ENCODE measurements at regions of chr6 and their contacts with region 1.

Region 1: DNA sequence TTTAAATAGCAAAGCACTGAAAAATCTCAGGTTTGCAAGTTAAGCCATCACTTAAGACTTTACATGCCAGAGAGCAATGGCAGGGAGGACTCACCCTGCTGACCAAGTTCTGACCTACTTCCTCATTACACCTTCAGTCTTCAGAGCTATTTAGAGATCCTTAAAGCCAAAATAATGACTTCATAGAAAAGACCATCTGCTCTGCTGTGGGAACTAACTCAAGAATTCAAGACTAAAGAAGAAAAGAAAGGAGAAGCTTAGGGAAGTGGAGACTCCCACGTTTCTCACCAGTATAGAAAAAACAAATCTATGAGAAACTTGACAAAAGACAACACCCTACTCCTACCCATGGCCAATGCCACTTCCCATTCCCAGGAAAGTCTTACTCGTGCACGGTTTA is 28.6 kb downstream of the XPO5 start:
- DNase-seq: no peak
- ATAC-seq: no peak
- H3K4me3 Mint-ChIP-seq: no peak overlapping the region
- H3K27ac Mint-ChIP-seq: no peak overlapping the region
- H3K4me1 Mint-ChIP-seq: no peaks in the 10 kb centered on the region
- H3K27me3 Mint-ChIP-seq: no peaks in the 10 kb centered on the region

Region 2: GRCh38 chr6:43559328-43559727 is 12.1 kb after region 1 on chr6:
- CTCF ChIA-PET with region 1: interaction called, 5 read pairs
- POLR2A ChIA-PET with region 1: no interaction called
- intact Hi-C with region 1: loop called in 1 of 2 experiments (anchors 2 kb)
- DNase-seq: no peak
- ATAC-seq: no peak
- H3K4me3 Mint-ChIP-seq: no peak overlapping the region
- H3K27ac Mint-ChIP-seq: no peak overlapping the region
- H3K4me1 Mint-ChIP-seq: no peaks in the 10 kb centered on the region
- H3K27me3 Mint-ChIP-seq: no peaks in the 10 kb centered on the region

Region 3: GRCh38 chr6:43817192-43817591 is 270.0 kb after region 1 on chr6:
- CTCF ChIA-PET with region 1: no interaction called
- POLR2A ChIA-PET with region 1: no interaction called
- intact Hi-C with region 1: no loop called
- DNase-seq: peak; percentile 54
- ATAC-seq: peak; percentile 75
- H3K4me3 Mint-ChIP-seq: no peak overlapping the region
- H3K27ac Mint-ChIP-seq: no peak overlapping the region
- H3K4me1 Mint-ChIP-seq: peaks cover 6% of the 10 kb centered on the region
- H3K27me3 Mint-ChIP-seq: no peaks in the 10 kb centered on the region

Measured in activated CD4-positive, alpha-beta T cell treated with anti-CD3 and anti-CD28 coated beads for 36 hours (primary cell).